ENCODE measurements at regions of chr11 and their contacts with region 1.

Region 1: GRCh38 chr11:65497141-65498041 is 1.5 kb upstream of the MALAT1 start:
- DNase-seq: peak; percentile 99
- ATAC-seq: peak; percentile 77
- H3K4me3 Mint-ChIP-seq: no peak overlapping the region
- H3K27ac Mint-ChIP-seq: no peak overlapping the region
- H3K4me1 Mint-ChIP-seq: peaks cover 33% of the 10 kb centered on the region
- H3K27me3 Mint-ChIP-seq: no peaks in the 10 kb centered on the region
- CTCF ChIP-seq: no peak

Region 2: DNA sequence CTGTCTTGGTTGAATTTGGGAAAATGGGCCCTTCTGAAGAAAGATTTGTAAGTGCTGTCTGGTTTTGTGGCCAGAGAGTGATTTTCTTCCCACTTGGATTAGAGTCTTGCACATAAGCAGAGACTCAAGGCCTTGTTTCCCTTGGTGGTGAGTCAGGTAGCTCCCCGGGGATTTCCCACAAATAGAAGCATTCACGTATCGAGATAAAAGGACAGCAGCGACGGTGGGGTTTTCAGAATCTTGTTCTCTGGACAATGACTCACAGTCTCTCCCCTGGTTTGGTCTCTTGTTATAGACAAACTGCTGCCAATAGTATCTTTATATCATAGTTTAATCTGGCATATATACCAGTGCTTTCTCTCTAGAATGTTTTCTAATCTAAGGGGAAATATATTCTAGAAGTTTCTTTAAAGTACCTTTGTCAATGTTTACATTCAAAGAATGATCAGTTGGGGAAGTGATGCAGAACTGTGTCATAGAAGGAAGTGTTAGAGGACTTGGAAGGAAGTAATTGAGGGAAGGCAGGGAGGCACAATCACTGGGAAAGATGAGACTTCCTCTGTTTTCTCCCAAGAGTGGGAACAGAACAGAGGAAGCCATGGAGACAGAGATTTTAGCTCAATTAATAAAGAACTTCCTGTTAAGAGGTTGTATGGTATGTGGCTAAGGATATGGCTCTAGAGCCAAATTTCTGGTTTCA is 217.5 kb before region 1 on chr11:
- CTCF ChIA-PET with region 1: no interaction called
- POLR2A ChIA-PET with region 1: no interaction called
- intact Hi-C with region 1: no loop called
- DNase-seq: peak; percentile 75
- ATAC-seq: peak; percentile 94
- H3K4me3 Mint-ChIP-seq: no peak overlapping the region
- H3K27ac Mint-ChIP-seq: peak overlapping the region; percentile 83
- H3K4me1 Mint-ChIP-seq: peaks cover 17% of the 10 kb centered on the region
- H3K27me3 Mint-ChIP-seq: no peaks in the 10 kb centered on the region
- CTCF ChIP-seq: no peak

Region 3: DNA sequence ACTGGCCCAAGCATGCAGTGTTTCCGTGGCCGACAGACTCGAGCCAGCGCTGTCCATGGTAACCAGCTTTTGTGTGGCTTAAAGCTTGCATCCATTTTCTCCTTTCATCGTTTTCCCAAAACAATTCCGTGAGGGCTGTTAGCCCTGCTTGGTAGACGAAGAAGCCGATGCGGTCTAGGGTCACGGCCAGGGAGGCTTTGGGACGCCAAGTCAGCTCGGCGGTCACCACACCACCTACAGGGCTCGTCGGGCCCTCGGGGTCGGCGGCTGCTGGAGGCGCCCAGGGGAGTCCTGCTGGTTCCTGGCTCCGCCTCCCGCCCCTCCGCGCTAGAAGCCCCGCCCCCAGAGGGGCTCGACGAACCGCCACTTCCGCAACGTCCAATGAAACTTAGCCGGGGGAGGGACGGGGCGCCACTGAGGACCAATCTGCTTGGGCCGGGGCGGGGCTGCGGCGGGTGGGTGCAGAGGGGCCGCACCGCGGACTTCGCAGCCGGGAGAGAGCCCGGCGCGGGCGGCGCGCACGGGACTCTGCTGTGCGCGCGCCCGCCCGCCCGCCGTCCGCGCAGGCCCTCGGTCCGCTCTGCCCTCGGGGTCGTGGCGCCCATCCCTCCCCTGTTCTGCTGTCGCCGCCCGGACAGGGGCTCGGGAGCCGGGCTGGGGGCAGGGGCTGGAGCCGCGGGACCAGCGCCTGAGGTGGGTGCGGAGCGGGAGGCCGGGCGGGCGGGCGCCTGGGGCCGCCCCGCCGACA is 143.0 kb before region 1 on chr11 and contains the start of gene TIGD3:
- CTCF ChIA-PET with region 1: no interaction called
- POLR2A ChIA-PET with region 1: interaction called, 20 read pairs
- intact Hi-C with region 1: no loop called
- DNase-seq: peak; percentile 99
- ATAC-seq: peak; percentile 99
- H3K4me3 Mint-ChIP-seq: peak within 1 kb of the TSS; percentile 82
- H3K27ac Mint-ChIP-seq: peak within 1 kb of the TSS; percentile 63
- H3K4me1 Mint-ChIP-seq: peaks cover 13% of the 10 kb centered on the region
- H3K27me3 Mint-ChIP-seq: no peaks in the 10 kb centered on the region
- CTCF ChIP-seq: no peak
- total RNA-seq, gene TIGD3: 0.65 to 1.4 TPM

Region 4: DNA sequence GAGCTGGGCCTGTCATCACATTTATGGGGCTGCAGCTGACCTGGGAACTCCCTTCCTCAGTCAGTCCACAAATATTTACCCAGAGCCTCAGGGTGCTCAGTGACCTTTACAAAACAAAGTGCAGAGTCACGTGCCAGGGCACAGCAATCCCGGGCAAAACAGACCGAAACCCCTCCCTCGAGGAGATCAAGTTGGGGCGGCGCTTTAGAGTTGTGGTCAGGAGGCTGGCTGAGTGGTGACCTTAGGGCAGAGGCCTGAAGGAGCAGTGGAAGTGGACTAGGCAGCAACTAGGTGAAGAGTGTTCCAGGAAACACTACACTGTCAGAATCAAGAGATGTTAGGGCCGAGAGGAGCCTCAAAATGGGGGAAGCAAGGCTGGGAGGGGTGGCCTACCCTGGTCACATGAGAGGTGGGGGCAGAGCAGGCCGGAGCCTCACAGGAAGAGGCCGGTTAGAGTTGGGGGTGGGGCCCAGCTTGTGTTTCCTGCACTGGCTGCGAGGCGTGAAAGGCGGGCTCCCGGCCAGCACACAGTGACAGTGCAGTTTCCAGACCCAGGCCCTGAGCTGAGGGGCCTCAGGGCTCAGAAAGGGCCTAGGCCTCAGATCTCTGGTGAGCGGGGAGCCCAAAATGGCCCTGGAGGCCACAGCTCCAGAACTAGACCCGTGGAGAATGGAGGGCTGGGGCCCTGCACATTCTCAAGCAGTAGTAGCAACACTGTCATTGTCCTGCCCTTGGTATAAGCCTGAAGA is 78.5 kb before region 1 on chr11:
- CTCF ChIA-PET with region 1: interaction called, 448 read pairs
- POLR2A ChIA-PET with region 1: interaction called, 4,842 read pairs
- intact Hi-C with region 1: loop called (anchors 2 kb)
- DNase-seq: peak; percentile 98
- ATAC-seq: peak; percentile 53
- H3K4me3 Mint-ChIP-seq: peak overlapping the region; percentile 89
- H3K27ac Mint-ChIP-seq: peak overlapping the region; percentile 98
- H3K4me1 Mint-ChIP-seq: peaks cover 36% of the 10 kb centered on the region
- H3K27me3 Mint-ChIP-seq: peaks cover 8% of the 10 kb centered on the region
- CTCF ChIP-seq: no peak

Region 5: GRCh38 chr11:65448418-65449105 is 48.8 kb before region 1 on chr11:
- CTCF ChIA-PET with region 1: no interaction called
- POLR2A ChIA-PET with region 1: interaction called, 59 read pairs
- intact Hi-C with region 1: no loop called
- DNase-seq: peak; percentile 48
- ATAC-seq: peak; percentile 29
- H3K4me3 Mint-ChIP-seq: no peak overlapping the region
- H3K27ac Mint-ChIP-seq: peak overlapping the region; percentile 37
- H3K4me1 Mint-ChIP-seq: peaks cover 17% of the 10 kb centered on the region
- H3K27me3 Mint-ChIP-seq: no peaks in the 10 kb centered on the region
- CTCF ChIP-seq: no peak

Region 6: GRCh38 chr11:65477149-65477965 is 20.0 kb before region 1 on chr11:
- CTCF ChIA-PET with region 1: interaction called, 15 read pairs
- POLR2A ChIA-PET with region 1: interaction called, 687 read pairs
- intact Hi-C with region 1: no loop called
- DNase-seq: peak; percentile 94
- ATAC-seq: peak; percentile 85
- H3K4me3 Mint-ChIP-seq: peak overlapping the region; percentile 96
- H3K27ac Mint-ChIP-seq: peak overlapping the region; percentile 100
- H3K4me1 Mint-ChIP-seq: peaks cover 8% of the 10 kb centered on the region
- H3K27me3 Mint-ChIP-seq: no peaks in the 10 kb centered on the region
- CTCF ChIP-seq: no peak

Region 7: DNA sequence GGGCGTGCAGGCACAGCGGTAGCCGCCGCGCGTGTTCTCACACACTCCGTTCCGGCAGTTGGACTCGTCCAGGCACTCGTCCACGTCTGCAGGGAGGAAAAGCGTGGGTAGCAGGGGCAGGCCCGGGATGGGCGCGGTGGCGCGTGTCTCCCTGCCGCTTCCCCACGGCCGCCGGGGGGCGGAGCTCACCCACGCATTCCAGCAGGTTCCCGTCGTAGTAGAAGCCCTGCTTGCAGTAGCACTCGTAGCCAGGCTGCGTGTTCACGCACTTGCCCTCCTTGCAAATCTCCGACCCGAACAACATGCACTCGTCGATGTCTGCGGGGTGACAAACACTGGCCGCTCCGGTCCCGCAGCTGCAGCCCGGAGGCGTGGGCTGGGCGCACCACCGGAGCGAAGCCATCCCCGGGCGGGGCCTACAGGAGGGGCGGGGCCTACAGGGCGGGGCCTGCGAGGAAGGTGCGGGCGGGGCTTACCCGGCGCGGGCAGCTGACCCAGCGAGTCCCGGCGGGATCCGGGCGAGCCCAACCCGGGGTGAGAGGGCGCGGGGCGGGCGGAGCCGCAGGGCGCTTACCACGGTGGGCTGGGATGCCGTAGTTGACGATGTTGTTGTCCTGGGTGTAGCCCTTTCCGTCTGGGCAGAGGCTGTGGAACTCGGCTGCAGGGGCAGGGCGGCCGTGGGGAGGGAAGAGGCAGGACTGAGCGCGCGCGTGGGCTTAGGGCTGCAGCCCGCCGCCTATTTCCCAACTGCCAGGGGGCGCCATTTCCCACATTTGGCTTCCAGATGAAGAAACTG is 43.1 kb after region 1 on chr11:
- CTCF ChIA-PET with region 1: interaction called, 3 read pairs
- POLR2A ChIA-PET with region 1: interaction called, 17 read pairs
- intact Hi-C with region 1: no loop called
- DNase-seq: peak; percentile 92
- ATAC-seq: peak; percentile 93
- H3K4me3 Mint-ChIP-seq: peak overlapping the region; percentile 76
- H3K27ac Mint-ChIP-seq: peak overlapping the region; percentile 86
- H3K4me1 Mint-ChIP-seq: peaks cover 22% of the 10 kb centered on the region
- H3K27me3 Mint-ChIP-seq: no peaks in the 10 kb centered on the region
- CTCF ChIP-seq: peak; percentile 75

Region 8: GRCh38 chr11:65615229-65615941 is 118.0 kb after region 1 on chr11 and contains the start of gene PCNX3:
- CTCF ChIA-PET with region 1: interaction called, 3 read pairs
- POLR2A ChIA-PET with region 1: interaction called, 23 read pairs
- intact Hi-C with region 1: no loop called
- DNase-seq: peak; percentile 100
- ATAC-seq: peak; percentile 90
- H3K4me3 Mint-ChIP-seq: peak within 1 kb of the TSS; percentile 93
- H3K27ac Mint-ChIP-seq: peak within 1 kb of the TSS; percentile 97
- H3K4me1 Mint-ChIP-seq: peaks cover 45% of the 10 kb centered on the region
- H3K27me3 Mint-ChIP-seq: no peaks in the 10 kb centered on the region
- CTCF ChIP-seq: no peak
- total RNA-seq, gene PCNX3: 34.3 to 34.4 TPM